Body of pancreas (tissue), 4 donors: ENCODE measurements at regions of chr14 and their contacts with region 1.

Region 1: GRCh38 chr14:68979783-68980473 is 826 bp upstream of the ACTN1 start:
- DNase-seq: peak; percentile 50 to 64 (median 56)
- ATAC-seq: peak; percentile 8
- H3K4me3 ChIP-seq: peak overlapping the region; percentile 40 to 92
- H3K27ac ChIP-seq: peak overlapping the region; percentile 91 to 97 (median 93)
- H3K4me1 ChIP-seq: peaks cover 50% of the 10 kb centered on the region
- H3K27me3 ChIP-seq: no peaks in the 10 kb centered on the region
- CTCF ChIP-seq: no peak
- POLR2A ChIP-seq: no peak

Region 2: DNA sequence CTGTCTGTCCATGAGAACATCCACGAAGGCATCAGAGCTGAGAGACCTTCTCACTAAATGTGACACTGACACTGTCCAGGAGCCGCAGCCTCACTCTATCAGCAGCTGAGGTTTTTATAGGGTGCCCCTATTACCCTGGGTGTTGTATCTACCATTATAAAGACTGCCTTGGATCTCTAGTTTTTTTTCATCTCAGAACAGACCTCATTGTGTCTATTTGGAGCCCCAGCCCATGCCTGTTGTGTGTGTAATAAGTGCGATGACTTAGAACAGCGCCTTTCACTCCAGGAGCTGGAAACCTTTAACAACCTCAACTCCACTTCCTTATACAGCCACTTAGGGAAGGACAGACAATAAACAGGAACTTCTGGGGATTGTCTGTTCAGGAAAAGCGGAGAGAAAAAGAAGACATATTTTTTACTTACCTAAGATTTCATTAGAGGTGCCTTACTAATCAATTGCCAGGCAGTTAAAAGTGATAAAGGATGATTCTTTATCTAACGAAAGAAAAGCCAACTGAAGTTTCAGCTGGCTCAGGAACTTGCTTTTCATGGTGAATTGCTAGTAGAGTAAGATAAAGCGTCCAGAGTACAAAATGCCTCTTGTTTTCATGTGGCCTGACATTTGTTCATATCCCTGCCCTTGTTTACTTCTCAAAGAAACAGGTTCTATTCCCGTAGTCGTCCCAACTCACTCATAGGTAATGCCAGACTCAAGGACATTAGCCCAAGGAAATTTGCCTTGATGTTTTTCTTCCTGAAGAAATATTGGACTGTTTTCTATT is 739.7 kb before region 1 on chr14:
- intact Hi-C with region 1: no loop called
- DNase-seq: peak in 2 of 4 donors; percentile 25 to 34
- ATAC-seq: peak; percentile 67
- H3K4me3 ChIP-seq: no peak overlapping the region
- H3K27ac ChIP-seq: peak overlapping the region; percentile 27 to 78 (median 57)
- H3K4me1 ChIP-seq: peaks cover 72% of the 10 kb centered on the region
- H3K27me3 ChIP-seq: no peaks in the 10 kb centered on the region
- CTCF ChIP-seq: no peak
- POLR2A ChIP-seq: no peak

Region 3: GRCh38 chr14:68905107-68905895 is 74.6 kb before region 1 on chr14:
- intact Hi-C with region 1: loop called (anchors 5 kb)
- DNase-seq: no peak
- ATAC-seq: no peak
- H3K4me3 ChIP-seq: no peak overlapping the region
- H3K27ac ChIP-seq: no peak overlapping the region
- H3K4me1 ChIP-seq: no peaks in the 10 kb centered on the region
- H3K27me3 ChIP-seq: no peaks in the 10 kb centered on the region
- CTCF ChIP-seq: no peak
- POLR2A ChIP-seq: no peak

Region 4: GRCh38 chr14:68939893-68940613 is 39.9 kb before region 1 on chr14:
- intact Hi-C with region 1: no loop called
- DNase-seq: peak; percentile 79 to 90 (median 86)
- ATAC-seq: peak; percentile 70
- H3K4me3 ChIP-seq: no peak overlapping the region
- H3K27ac ChIP-seq: peak overlapping the region; percentile 68 to 91 (median 89)
- H3K4me1 ChIP-seq: peaks cover 100% of the 10 kb centered on the region
- H3K27me3 ChIP-seq: no peaks in the 10 kb centered on the region
- CTCF ChIP-seq: no peak
- POLR2A ChIP-seq: peak in 2 of 3 donors; percentile 59 to 65